Activated CD4-positive, alpha-beta T cell treated with anti-CD3 and anti-CD28 coated beads, Interleukin-2, amount 10 ng/mL, durations not matched to agents 24 days and 14 days (primary cell): ENCODE measurements at regions of chr2 and their contacts with region 1.

Region 1: DNA sequence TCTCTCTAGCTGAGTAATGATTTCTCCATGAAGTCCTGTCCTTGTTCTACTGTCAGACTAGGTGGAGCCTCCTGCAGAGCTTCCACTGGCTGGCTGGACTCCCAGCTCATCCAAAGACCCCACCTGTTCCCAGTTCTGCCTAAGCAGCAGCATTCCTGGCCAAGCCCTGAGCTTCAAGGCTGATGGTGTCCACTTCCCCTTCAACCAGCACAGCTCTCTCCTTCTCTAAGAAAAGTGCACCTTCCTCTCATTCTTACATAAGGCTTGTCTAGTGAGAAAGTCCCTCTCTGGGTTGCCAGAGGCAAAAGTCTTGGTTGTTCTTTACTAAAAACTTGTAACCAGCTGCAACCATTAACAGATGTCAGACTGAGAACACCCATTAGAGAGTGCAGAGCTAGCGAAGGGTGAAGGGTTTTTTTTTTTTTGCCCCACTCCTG is 58.9 kb downstream of the CXCR4 start:
- DNase-seq: peak; percentile 60
- H3K4me3 Mint-ChIP-seq: peak overlapping the region; percentile 21
- H3K27ac Mint-ChIP-seq: peak overlapping the region; percentile 9
- H3K4me1 Mint-ChIP-seq: peaks cover 70% of the 10 kb centered on the region
- H3K27me3 Mint-ChIP-seq: no peaks in the 10 kb centered on the region

Region 2: GRCh38 chr2:135664623-135665068 is 394.4 kb before region 1 on chr2:
- intact Hi-C with region 1: loop called (anchors 2 kb)
- DNase-seq: no peak
- H3K4me3 Mint-ChIP-seq: no peak overlapping the region
- H3K27ac Mint-ChIP-seq: peak overlapping the region; percentile 79
- H3K4me1 Mint-ChIP-seq: peaks cover 31% of the 10 kb centered on the region
- H3K27me3 Mint-ChIP-seq: no peaks in the 10 kb centered on the region

Region 3: DNA sequence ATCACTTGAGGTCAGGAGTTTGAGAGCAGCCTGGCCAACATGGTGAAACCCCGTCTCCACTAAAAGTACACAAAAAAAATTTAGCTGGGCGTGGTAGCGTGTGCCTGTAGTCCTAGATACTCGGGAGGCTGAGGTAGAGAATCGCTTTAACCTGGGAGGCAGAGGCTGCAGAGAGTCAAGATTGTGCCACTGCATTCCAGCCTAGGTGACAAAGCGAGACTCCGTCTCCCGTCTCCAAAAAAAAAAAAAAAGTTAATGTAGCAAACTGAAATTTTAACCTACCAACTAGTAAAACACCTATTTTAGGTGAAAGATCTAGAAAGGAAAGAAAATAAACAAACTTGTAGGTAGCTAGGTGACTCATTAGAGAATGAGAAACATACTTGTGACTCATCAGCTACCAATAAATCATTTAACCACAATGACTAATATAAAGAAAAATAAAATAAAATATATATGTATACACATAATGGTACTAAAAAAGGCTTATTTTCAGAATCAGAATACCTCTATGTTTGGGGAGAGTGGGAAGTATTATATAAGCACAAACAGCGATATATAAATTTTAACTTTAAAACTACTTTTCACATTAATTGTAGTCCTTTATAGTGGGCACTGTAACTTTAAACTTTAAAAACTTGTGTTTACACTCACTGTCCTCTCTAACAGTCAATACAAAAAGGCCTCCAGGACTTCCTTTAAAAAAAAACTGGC is 110.3 kb before region 1 on chr2:
- intact Hi-C with region 1: loop called (anchors 1 kb)
- DNase-seq: peak; percentile 71
- H3K4me3 Mint-ChIP-seq: peak overlapping the region; percentile 60
- H3K27ac Mint-ChIP-seq: peak overlapping the region; percentile 94
- H3K4me1 Mint-ChIP-seq: peaks cover 51% of the 10 kb centered on the region
- H3K27me3 Mint-ChIP-seq: no peaks in the 10 kb centered on the region

Region 4: DNA sequence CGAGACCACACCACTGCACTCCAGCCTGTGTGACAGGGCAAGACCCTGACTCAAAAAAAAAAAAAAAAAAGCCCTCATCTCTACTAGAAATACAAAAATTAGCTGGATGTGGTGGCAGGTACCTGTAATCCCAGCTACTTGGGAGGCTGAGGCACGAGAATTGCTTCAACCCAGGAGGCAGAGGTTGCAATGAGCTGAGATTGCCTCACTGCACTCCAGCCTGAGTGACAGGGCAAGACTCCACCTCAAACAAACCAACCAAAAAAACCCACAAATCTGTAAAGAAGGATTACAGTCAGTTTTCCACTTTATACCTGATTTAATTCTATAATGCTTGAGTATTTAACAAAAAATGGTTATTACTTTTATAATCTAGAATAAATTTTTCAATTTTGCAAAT is 83.4 kb before region 1 on chr2:
- intact Hi-C with region 1: no loop called
- DNase-seq: no peak
- H3K4me3 Mint-ChIP-seq: no peak overlapping the region
- H3K27ac Mint-ChIP-seq: peak overlapping the region; percentile 29
- H3K4me1 Mint-ChIP-seq: peaks cover 52% of the 10 kb centered on the region
- H3K27me3 Mint-ChIP-seq: no peaks in the 10 kb centered on the region

Region 5: DNA sequence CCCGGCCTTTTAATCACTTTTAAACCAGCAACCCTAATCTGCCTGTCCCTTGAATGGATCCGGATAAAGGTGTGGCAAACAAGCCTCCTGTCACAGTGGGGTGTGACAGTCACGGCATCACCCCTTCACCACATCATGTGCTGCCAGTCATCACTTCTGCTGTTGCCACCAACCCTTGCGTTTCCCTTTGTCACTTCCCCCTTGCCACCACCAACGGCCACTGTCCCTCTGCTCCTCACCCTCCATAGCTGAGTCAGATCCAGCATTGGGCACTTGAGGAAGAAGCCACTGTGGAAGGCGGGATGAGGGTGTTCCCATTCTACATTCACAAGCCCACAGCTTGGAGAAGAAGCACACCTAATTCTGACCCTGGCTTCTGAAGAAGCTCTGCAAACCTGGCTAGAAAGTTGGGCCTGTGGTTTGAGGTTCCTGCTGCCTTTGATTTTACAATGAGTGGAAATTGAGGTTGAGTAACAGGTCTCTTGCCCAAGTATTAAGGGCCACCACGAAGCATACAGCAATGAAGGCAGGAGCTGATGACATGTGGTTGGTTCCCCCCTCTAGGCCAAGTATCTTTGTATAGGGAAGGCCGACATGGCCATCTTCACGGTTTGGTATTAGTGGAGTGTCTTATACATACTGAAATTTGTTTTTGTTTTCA is 50.7 kb before region 1 on chr2:
- intact Hi-C with region 1: loop called (anchors 2 kb)
- DNase-seq: peak; percentile 85
- H3K4me3 Mint-ChIP-seq: peak overlapping the region; percentile 25
- H3K27ac Mint-ChIP-seq: peak overlapping the region; percentile 60
- H3K4me1 Mint-ChIP-seq: peaks cover 35% of the 10 kb centered on the region
- H3K27me3 Mint-ChIP-seq: no peaks in the 10 kb centered on the region

Region 6: DNA sequence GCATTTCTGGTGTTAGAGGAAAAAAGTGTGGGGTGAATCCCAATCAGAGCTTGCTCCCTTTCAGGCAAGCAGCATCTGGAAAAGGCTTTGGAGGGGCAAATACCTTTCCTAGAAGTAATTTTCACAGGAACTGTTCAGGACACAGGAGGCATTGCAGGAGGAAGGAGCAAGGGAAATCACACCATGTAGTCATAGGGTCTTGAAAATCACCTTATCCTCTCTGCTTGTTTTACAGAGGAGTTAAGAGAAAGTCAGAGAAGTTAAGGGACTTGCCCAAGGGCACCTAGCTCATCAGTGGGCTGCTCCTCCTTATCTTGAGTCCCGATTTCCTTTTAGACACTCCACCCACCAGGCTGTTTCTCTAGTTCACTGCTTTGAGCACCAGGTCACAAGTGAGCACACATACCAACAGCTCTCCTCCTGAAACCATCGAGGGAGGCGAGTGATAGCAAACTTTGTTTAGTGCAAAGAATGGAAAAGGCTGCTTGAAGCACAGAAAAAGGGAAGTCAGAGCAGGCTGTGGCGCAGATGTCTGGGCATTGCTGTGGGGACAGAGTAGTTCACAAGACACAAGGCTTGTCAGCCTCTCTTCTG is 148.1 kb after region 1 on chr2:
- intact Hi-C with region 1: loop called (anchors 2 kb)
- DNase-seq: peak; percentile 60
- H3K4me3 Mint-ChIP-seq: peak overlapping the region; percentile 8
- H3K27ac Mint-ChIP-seq: peak overlapping the region; percentile 92
- H3K4me1 Mint-ChIP-seq: peaks cover 23% of the 10 kb centered on the region
- H3K27me3 Mint-ChIP-seq: peaks cover 4% of the 10 kb centered on the region

Region 7: GRCh38 chr2:136327162-136327852 is 268.3 kb after region 1 on chr2:
- intact Hi-C with region 1: loop called (anchors 1 kb)
- DNase-seq: peak; percentile 91
- H3K4me3 Mint-ChIP-seq: peak overlapping the region; percentile 74
- H3K27ac Mint-ChIP-seq: peak overlapping the region; percentile 92
- H3K4me1 Mint-ChIP-seq: peaks cover 49% of the 10 kb centered on the region
- H3K27me3 Mint-ChIP-seq: no peaks in the 10 kb centered on the region